Heart right ventricle (tissue), 16 donors: ENCODE measurements at regions of chr4 and their contacts with region 1.

Region 1: GRCh38 chr4:167129146-167129545 is 105.1 kb downstream of the SPOCK3 start:
- DNase-seq: no peak
- ATAC-seq: peak in 5 of 8 donors; percentile 45 to 86 (median 74)
- H3K4me3 ChIP-seq: no peak overlapping the region
- H3K27ac ChIP-seq: no peak overlapping the region
- H3K4me1 ChIP-seq: peaks cover 0 to 10% (median 0%) of the 10 kb centered on the region in 9 donors
- H3K27me3 ChIP-seq: no peaks in the 10 kb centered on the region
- CTCF ChIP-seq: no peak

Region 2: DNA sequence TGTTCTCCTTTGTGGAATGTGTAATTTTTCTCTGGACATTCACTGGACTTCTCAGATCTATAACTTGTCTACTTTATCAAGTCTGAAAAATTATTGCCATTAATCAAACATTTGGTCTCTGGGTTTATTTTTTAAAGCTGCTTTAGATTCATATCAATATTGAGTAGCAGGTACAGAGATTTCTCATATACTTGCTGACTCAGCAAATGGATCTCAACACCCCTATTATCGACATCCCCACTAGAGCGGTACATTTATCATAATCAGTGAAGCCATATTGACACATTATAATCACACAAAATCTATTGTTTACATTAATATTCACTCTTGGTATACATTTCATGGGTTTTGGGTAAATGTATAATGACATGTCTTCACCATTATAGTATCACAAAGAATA is 163.6 kb before region 1 on chr4:
- intact Hi-C with region 1: no loop called
- DNase-seq: no peak
- ATAC-seq: no peak
- H3K4me3 ChIP-seq: no peak overlapping the region
- H3K27ac ChIP-seq: no peak overlapping the region
- H3K4me1 ChIP-seq: no peaks in the 10 kb centered on the region
- H3K27me3 ChIP-seq: no peaks in the 10 kb centered on the region
- CTCF ChIP-seq: no peak

Region 3: GRCh38 chr4:167088115-167088514 is 41.0 kb before region 1 on chr4:
- intact Hi-C with region 1: loop called in 1 of 10 experiments (anchors 1 kb)
- DNase-seq: no peak
- ATAC-seq: no peak
- H3K4me3 ChIP-seq: no peak overlapping the region
- H3K27ac ChIP-seq: no peak overlapping the region
- H3K4me1 ChIP-seq: no peaks in the 10 kb centered on the region
- H3K27me3 ChIP-seq: no peaks in the 10 kb centered on the region
- CTCF ChIP-seq: no peak